Right ventricle myocardium superior (tissue), 1 donor: ENCODE measurements at regions of chr11 and their contacts with region 1.

Region 1: DNA sequence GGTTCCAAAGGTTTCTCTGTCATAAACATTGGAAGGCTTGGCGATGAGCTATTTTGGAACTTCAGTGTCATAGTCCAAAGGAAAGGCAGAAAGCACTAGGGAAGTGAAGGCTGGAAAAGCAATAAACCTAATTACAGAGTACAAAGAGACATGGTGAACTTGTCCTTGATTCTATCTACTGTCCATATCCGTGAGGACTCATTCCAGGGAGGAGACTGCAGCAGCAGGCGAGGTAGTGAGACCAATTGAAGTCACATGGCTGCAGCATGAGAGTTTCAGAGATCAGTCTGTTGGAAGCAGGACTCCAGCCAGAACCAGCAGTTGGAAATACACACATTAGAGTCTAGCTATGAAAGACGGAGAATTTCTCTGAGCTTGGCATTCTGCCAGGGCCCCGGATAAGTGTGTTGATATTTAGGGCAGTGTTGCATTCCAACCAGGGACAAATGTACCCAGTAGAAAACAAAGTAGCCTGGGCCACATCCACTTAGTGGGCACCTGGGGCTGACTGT is 54.1 kb upstream of the ARHGAP42 start:
- DNase-seq: peak; percentile 73
- ATAC-seq: peak; percentile 92

Region 2: GRCh38 chr11:100528872-100529416 is 104.1 kb before region 1 on chr11:
- intact Hi-C with region 1: no loop called
- DNase-seq: no peak
- ATAC-seq: no peak

Region 3: GRCh38 chr11:100575870-100576705 is 56.9 kb before region 1 on chr11:
- intact Hi-C with region 1: no loop called
- DNase-seq: no peak
- ATAC-seq: peak; percentile 95

Region 4: GRCh38 chr11:100739666-100740065 is 106.7 kb after region 1 on chr11:
- intact Hi-C with region 1: loop called (anchors 10 kb)
- DNase-seq: no peak
- ATAC-seq: peak; percentile 90